Activated T-helper 1 cell treated with anti-CD3 and anti-CD28 coated beads, Interleukin-12 subunit alpha, Interleukin-12 subunit beta, Interleukin-2, Interleukin-4 antibody, amounts not matched to agents 30 ng/mL and 10 ng/mL and 1 ng/mL, durations not matched to agents 14 hours and 24 hours and 36 hours (primary cell): ENCODE measurements at regions of chr7 and their contacts with region 1.

Region 1: GRCh38 chr7:70678621-70679251 is 453.2 kb upstream of the GALNT17 start:
- DNase-seq: no peak
- H3K4me3 Mint-ChIP-seq: no peak overlapping the region
- H3K27ac Mint-ChIP-seq: no peak overlapping the region
- H3K4me1 Mint-ChIP-seq: peaks cover 33% of the 10 kb centered on the region
- H3K27me3 Mint-ChIP-seq: peaks cover 13% of the 10 kb centered on the region

Region 2: GRCh38 chr7:70647801-70648498 is 30.8 kb before region 1 on chr7:
- intact Hi-C with region 1: loop called (anchors 1 kb)
- DNase-seq: peak; percentile 76
- H3K4me3 Mint-ChIP-seq: peak overlapping the region; percentile 0
- H3K27ac Mint-ChIP-seq: peak overlapping the region; percentile 31
- H3K4me1 Mint-ChIP-seq: peaks cover 15% of the 10 kb centered on the region
- H3K27me3 Mint-ChIP-seq: peaks cover 14% of the 10 kb centered on the region

Region 3: GRCh38 chr7:70660154-70660818 is 18.4 kb before region 1 on chr7:
- intact Hi-C with region 1: loop called (anchors 2 kb)
- DNase-seq: peak; percentile 6
- H3K4me3 Mint-ChIP-seq: no peak overlapping the region
- H3K27ac Mint-ChIP-seq: no peak overlapping the region
- H3K4me1 Mint-ChIP-seq: peaks cover 16% of the 10 kb centered on the region
- H3K27me3 Mint-ChIP-seq: peaks cover under 1% of the 10 kb centered on the region

Region 4: DNA sequence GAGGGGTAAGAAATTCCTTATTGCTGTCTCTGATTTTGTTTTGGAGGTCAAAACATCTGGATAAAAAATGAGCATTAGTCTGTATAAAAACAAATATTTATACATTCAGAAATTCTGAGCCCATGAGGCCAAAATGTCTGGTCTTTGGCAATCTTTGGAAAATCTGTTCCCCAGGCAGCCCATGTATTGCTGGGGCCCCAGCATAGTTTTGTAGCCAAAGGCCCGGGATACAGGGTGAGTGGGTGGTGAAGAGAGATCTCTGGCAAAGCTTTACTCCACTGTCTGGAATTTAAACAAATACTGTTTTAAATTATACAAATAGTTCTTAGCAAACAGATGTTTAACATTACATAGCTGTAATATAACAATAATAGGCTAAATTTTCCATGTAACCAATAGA is 318.5 kb after region 1 on chr7:
- intact Hi-C with region 1: no loop called
- DNase-seq: no peak
- H3K4me3 Mint-ChIP-seq: no peak overlapping the region
- H3K27ac Mint-ChIP-seq: no peak overlapping the region
- H3K4me1 Mint-ChIP-seq: no peaks in the 10 kb centered on the region
- H3K27me3 Mint-ChIP-seq: no peaks in the 10 kb centered on the region